ENCODE measurements at regions of chr18 and their contacts with region 1.

Region 1: DNA sequence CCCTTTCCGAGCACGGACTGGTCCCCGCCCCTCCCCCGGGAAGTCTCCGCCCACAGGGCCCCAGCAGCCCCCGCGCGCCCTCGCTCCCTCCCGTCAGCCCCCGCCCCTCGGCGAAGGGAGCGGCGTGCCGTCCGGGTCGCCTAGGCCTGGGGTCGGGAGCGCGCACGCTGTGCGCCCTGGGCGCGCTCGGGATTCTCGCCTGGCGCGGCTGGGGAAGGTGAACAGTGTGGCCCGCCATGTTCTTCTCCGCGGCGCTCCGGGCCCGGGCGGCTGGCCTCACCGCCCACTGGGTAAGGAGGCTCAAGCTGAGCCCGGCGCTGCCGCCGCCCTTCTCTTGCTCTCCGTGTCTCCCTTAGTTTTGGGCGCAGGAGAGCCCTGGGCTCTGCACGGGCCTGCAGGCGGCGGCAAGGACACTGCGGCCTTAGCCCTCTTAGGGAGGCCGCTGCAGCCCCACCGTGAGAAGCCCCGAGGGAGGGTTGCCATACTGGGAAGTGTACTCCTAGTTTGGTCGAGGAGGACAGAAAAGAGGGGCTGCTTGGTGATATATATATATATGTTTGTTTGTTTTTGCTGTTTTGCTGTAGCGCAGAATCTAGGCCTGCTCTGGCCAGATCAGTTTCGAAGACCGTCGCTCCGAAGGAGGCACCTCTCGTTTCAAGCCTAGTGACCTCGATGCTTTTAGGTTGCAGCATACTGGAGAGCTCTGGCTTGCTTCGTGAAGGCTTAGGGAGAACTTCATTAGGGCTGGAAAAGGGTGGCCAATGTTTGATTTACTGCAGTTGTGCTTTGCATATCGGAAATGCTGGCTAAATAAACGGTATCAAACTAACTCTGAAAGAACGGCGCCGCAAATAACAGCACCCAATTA is at the start of gene NDUFV2:
- H3K4me3 Mint-ChIP-seq: peak within 1 kb of the TSS; percentile 84
- H3K27ac Mint-ChIP-seq: peak within 1 kb of the TSS; percentile 94
- H3K4me1 Mint-ChIP-seq: peaks cover 37% of the 10 kb centered on the region
- H3K27me3 Mint-ChIP-seq: no peaks in the 10 kb centered on the region

Region 2: DNA sequence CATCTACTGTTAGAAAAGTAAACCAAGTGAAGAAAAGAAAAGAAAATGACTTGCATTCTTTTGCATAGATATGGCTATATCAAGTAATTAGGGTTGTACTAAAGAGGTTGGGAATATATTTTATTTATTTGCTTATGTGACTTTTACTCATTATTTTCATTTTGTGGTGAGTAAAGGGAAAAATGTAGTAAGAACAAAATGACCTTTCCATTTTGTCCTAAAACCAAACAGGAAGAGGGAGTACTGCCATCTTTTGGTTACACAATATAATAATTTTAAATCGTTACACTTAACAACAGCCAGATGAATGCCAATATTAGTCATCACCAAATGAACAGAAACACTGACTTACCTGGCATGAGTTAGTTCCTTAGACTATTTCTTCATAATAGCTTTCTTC is 47.6 kb before region 1 on chr18:
- intact Hi-C with region 1: no loop called
- H3K4me3 Mint-ChIP-seq: no peak overlapping the region
- H3K27ac Mint-ChIP-seq: no peak overlapping the region
- H3K4me1 Mint-ChIP-seq: peaks cover under 1% of the 10 kb centered on the region
- H3K27me3 Mint-ChIP-seq: no peaks in the 10 kb centered on the region

Region 3: DNA sequence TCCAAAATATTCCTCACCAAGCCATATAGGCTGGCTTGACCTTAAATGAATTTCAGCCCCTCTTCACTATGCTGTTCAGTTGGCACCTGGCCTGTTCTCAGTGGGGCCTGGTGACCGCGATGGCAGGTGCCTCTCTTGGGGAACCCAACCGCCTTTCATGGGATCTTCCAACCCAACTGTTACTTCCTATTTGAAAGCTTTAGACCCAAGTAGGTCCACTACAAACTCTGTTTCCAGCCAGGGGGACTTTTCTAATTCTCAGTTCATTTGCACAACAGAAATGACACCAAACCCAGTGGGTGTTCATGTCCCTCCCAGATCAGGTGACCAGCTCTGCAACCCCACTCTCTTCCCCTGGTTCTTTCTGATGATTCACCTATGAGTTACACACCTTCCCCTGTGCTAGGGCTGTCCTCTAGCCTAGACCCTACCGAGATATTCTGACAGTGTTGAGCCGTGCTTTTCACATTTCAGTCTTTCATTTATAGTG is 35.9 kb before region 1 on chr18:
- intact Hi-C with region 1: loop called (anchors 2 kb)
- H3K4me3 Mint-ChIP-seq: no peak overlapping the region
- H3K27ac Mint-ChIP-seq: peak overlapping the region; percentile 2
- H3K4me1 Mint-ChIP-seq: peaks cover 70% of the 10 kb centered on the region
- H3K27me3 Mint-ChIP-seq: no peaks in the 10 kb centered on the region

Region 4: GRCh38 chr18:9082711-9083510 is 19.8 kb before region 1 on chr18:
- intact Hi-C with region 1: loop called (anchors 2 kb)
- H3K4me3 Mint-ChIP-seq: peak overlapping the region; percentile 34
- H3K27ac Mint-ChIP-seq: peak overlapping the region; percentile 97
- H3K4me1 Mint-ChIP-seq: peaks cover 60% of the 10 kb centered on the region
- H3K27me3 Mint-ChIP-seq: no peaks in the 10 kb centered on the region

Region 5: DNA sequence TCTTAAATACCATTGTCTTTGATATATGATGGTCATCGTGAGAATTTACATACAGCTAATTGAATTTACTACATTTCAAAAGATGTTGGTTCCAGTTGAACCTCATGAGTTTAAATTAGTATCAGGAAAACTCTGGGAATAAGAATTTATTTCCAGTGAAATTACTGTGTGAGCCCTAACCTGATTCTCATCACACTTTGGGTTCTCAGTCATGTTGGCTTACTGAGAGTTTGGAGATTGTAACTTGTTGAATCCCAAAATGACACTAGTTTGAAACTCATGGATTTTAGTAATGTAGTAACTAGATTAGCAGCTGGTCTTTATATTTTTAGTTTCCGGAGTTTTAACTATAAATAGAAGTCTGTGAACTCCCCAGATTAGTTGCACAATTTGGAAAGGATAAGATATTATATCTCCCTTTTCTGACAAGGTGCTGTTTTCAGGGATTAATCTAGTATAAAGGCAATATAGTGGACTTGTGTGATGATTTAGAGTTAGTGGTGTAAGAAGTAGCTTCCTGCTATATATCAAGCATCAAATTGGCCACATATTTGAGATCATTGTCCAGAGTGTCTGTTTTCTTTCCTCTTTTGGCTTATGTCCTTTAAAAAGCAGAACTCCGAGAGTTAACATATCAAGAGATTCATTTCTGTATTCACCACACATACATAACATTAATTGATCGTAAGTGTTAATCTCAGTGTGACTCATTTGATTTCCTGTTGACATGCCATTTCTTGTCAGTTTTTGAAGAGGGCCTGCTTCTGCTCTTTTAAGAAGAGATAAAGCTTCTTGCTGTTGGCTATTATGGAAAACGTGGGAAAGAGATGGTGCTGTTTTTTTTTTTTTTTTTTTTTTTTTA is 15.5 kb after region 1 on chr18:
- intact Hi-C with region 1: loop called (anchors 2 kb)
- H3K4me3 Mint-ChIP-seq: no peak overlapping the region
- H3K27ac Mint-ChIP-seq: peak overlapping the region; percentile 77
- H3K4me1 Mint-ChIP-seq: peaks cover 49% of the 10 kb centered on the region
- H3K27me3 Mint-ChIP-seq: no peaks in the 10 kb centered on the region

Region 6: DNA sequence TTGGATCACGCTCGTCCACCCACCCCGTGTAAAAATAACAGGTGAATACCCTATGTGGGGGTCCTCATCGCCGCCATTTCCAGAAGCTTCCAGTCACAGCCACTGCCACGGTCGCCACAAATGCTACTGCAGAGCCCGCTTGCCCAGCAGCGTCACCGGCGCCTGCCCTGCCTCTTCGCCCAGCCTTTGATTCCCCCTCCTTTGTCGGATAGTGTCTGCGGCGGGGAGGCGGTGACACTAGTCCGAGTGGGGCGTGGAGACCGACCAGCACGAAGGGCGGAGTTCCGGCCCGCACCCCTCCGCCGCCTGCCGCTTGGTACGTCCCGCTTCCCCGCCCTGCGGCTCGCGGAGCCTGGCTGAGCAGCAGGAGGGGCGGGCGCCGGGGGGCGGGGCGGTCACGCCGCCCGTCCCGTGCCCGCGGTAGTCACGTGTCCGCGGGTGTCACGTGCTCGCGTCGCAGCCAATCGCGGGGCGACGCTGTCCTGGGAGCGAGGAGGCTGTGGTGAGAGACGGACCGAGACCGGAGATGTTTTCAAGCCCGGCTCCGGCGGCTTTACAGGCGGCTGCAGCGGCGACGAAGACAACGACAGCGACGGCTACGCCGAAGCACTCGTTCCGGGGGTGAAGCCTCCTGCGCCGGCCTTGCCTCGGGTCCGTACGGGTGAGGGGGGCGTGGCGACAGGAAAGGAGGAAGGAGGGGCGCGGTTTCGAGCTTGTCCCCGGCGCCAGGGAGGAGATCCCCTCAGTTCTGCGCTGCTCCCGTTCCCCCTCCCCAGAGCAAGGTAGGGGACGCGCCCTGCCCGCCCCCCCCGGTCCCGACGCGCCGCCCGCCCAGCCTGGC is 33.8 kb after region 1 on chr18 and contains the start of gene ANKRD12:
- intact Hi-C with region 1: loop called (anchors 1 kb)
- H3K4me3 Mint-ChIP-seq: peak within 1 kb of the TSS; percentile 84
- H3K27ac Mint-ChIP-seq: peak within 1 kb of the TSS; percentile 98
- H3K4me1 Mint-ChIP-seq: peaks cover 33% of the 10 kb centered on the region
- H3K27me3 Mint-ChIP-seq: no peaks in the 10 kb centered on the region

Region 7: GRCh38 chr18:9184998-9185613 is 82.4 kb after region 1 on chr18:
- intact Hi-C with region 1: no loop called
- H3K4me3 Mint-ChIP-seq: peak overlapping the region; percentile 35
- H3K27ac Mint-ChIP-seq: peak overlapping the region; percentile 3
- H3K4me1 Mint-ChIP-seq: peaks cover 36% of the 10 kb centered on the region
- H3K27me3 Mint-ChIP-seq: no peaks in the 10 kb centered on the region